Aorta (tissue), 5 donors: ENCODE measurements at regions of chr20 and their contacts with region 1.

Region 1: GRCh38 chr20:62010551-62011402 is 54.9 kb downstream of the TAF4 start:
- DNase-seq: peak in 1 of 2 donors; percentile 67
- ATAC-seq: no peak
- H3K4me3 ChIP-seq: no peak overlapping the region
- H3K27ac ChIP-seq: no peak overlapping the region
- H3K4me1 ChIP-seq: no peaks in the 10 kb centered on the region
- H3K27me3 ChIP-seq: no peaks in the 10 kb centered on the region

Region 2: GRCh38 chr20:61510778-61511330 is 499.9 kb before region 1 on chr20:
- intact Hi-C with region 1: no loop called
- DNase-seq: peak in 1 of 2 donors; percentile 23
- ATAC-seq: no peak
- H3K4me3 ChIP-seq: no peak overlapping the region
- H3K27ac ChIP-seq: no peak overlapping the region
- H3K4me1 ChIP-seq: no peaks in the 10 kb centered on the region
- H3K27me3 ChIP-seq: no peaks in the 10 kb centered on the region

Region 3: GRCh38 chr20:62156592-62157386 is 146.0 kb after region 1 on chr20:
- intact Hi-C with region 1: loop called in 1 of 2 experiments (anchors 5 kb)
- DNase-seq: peak; percentile 75 to 91
- ATAC-seq: peak; percentile 71
- H3K4me3 ChIP-seq: no peak overlapping the region
- H3K27ac ChIP-seq: no peak overlapping the region
- H3K4me1 ChIP-seq: no peaks in the 10 kb centered on the region
- H3K27me3 ChIP-seq: no peaks in the 10 kb centered on the region